ENCODE measurements at regions of chr1 and their contacts with region 1.

Region 1: GRCh38 chr1:65830306-65830705 is 37.6 kb downstream of the PDE4B start:
- DNase-seq: peak; percentile 70
- H3K4me3 Mint-ChIP-seq: no peak overlapping the region
- H3K27ac Mint-ChIP-seq: peak overlapping the region; percentile 5
- H3K4me1 Mint-ChIP-seq: peaks cover 12% of the 10 kb centered on the region
- H3K27me3 Mint-ChIP-seq: peaks cover 38% of the 10 kb centered on the region

Region 2: DNA sequence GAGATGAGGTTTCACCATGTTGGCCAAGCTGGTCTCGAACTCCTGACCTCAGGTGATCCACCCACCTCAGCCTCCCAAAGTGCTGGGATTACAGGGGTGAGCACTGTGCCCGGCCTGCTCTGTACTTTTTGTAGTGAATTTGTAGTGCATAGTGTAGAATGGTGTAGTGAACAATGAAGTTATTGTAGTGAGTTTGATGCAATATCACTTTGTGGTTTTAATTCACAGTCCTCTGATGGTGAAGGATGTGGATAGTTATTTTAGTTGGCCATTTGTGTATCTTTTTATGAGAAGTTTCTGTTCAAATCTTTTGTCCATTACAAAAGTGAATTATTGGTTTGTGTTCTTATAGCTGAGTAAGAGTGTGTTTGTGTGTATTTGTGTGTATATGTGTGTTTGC is 20.0 kb after region 1 on chr1:
- intact Hi-C with region 1: no loop called
- DNase-seq: no peak
- H3K4me3 Mint-ChIP-seq: no peak overlapping the region
- H3K27ac Mint-ChIP-seq: no peak overlapping the region
- H3K4me1 Mint-ChIP-seq: no peaks in the 10 kb centered on the region
- H3K27me3 Mint-ChIP-seq: peaks cover 6% of the 10 kb centered on the region

Region 3: DNA sequence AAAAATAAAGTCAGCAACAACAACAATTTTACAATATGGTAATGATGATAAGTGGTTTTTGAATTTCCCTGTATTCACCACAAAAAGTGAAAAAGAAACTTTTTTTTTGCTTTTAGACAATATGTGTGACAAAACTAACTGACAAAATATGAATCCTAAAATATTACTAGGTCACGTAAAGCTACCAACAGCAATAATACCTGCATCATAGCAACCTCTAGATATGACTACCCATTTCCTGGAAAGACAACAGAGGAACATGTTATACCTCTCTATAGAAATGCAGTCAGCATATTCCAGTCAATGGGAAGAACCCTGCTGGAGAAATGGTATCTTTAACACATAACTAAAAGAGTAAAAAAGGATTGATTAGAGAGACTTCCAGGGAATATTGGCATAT is 36.1 kb after region 1 on chr1:
- intact Hi-C with region 1: loop called (anchors 2 kb)
- DNase-seq: no peak
- H3K4me3 Mint-ChIP-seq: no peak overlapping the region
- H3K27ac Mint-ChIP-seq: no peak overlapping the region
- H3K4me1 Mint-ChIP-seq: no peaks in the 10 kb centered on the region
- H3K27me3 Mint-ChIP-seq: peaks cover 8% of the 10 kb centered on the region